Spleen (tissue), 13 donors: ENCODE measurements at regions of chr17 and their contacts with region 1.

Region 1: DNA sequence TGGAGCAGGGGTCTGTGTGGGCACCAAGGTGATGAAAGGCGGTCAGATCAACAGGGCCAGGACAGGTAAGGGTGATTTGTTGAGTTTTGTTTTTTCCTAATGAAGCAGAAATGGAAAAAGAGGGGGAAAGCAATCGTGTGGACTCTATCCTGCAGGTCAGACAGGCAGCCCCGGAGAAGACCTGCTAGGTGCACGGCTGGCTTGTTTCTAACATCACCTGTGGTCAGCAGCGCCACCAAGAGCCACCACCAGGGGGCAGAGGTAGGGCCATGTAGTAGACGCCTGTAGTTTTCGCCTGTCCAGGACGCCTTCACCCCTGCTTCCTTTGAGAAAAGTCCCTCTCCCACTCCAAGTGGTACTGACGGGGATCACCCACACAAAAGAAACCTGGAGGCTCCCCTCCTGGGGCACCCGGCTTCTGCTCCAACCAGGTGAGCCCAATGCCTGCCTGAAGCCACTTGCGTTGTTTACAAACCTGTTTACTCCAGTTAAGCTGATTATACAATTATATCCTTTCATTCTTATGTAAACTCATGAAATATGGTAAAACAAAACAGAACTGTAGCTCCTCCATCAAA is 54.2 kb upstream of the SEC14L1 start:
- DNase-seq: peak; percentile 95
- H3K4me3 ChIP-seq: peak overlapping the region in 1 of 8 donors; percentile 10
- H3K27ac ChIP-seq: no peak overlapping the region
- H3K4me1 ChIP-seq: peaks cover 33 to 63% (median 50%) of the 10 kb centered on the region in 6 donors
- H3K27me3 ChIP-seq: peaks cover 0 to 13% (median 0%) of the 10 kb centered on the region in 7 donors
- CTCF ChIP-seq: peak; percentile 51 to 98 (median 94)
- POLR2A ChIP-seq: no peak

Region 2: GRCh38 chr17:77247048-77247541 is 160.6 kb after region 1 on chr17:
- intact Hi-C with region 1: loop called (anchors 2 kb)
- DNase-seq: peak; percentile 97
- H3K4me3 ChIP-seq: peak overlapping the region; percentile 29 to 74 (median 42)
- H3K27ac ChIP-seq: peak overlapping the region in 6 of 8 donors; percentile 38 to 75 (median 61)
- H3K4me1 ChIP-seq: peaks cover 4 to 18% (median 14%) of the 10 kb centered on the region in 6 donors
- H3K27me3 ChIP-seq: peaks cover 0 to 28% (median 0%) of the 10 kb centered on the region in 7 donors
- CTCF ChIP-seq: peak; percentile 89 to 100 (median 98)
- POLR2A ChIP-seq: no peak